Testis (tissue), 5 donors: ENCODE measurements at regions of chr3 and their contacts with region 1.

Region 1: DNA sequence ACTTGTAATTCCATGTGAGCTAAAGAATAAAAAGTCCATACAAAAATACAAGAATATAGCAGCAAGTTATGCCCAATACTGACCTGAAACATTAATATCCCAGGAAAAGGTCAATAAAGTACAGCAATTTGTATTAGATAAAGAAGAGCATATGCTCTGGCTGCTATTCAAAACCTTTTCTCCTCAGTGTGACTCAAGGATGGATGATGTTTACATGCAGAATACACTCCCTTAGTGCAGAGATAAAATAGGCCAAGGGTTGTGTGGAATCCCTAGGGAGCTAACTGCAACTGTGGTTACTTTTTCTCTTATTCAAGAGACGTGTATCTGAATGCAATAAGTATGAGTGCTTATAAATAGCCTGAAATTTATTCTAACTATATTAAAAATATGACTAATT is 78.7 kb downstream of the SLC9A9 start:
- DNase-seq: no peak
- H3K4me3 ChIP-seq: no peak overlapping the region
- H3K27ac ChIP-seq: no peak overlapping the region
- H3K4me1 ChIP-seq: no peaks in the 10 kb centered on the region
- H3K27me3 ChIP-seq: no peaks in the 10 kb centered on the region
- CTCF ChIP-seq: no peak
- POLR2A ChIP-seq: no peak

Region 2: GRCh38 chr3:143885780-143886427 is 116.3 kb after region 1 on chr3:
- intact Hi-C with region 1: no loop called
- DNase-seq: peak; percentile 43
- H3K4me3 ChIP-seq: no peak overlapping the region
- H3K27ac ChIP-seq: no peak overlapping the region
- H3K4me1 ChIP-seq: no peaks in the 10 kb centered on the region
- H3K27me3 ChIP-seq: no peaks in the 10 kb centered on the region
- CTCF ChIP-seq: peak; percentile 6 to 56 (median 37)
- POLR2A ChIP-seq: no peak

Region 3: DNA sequence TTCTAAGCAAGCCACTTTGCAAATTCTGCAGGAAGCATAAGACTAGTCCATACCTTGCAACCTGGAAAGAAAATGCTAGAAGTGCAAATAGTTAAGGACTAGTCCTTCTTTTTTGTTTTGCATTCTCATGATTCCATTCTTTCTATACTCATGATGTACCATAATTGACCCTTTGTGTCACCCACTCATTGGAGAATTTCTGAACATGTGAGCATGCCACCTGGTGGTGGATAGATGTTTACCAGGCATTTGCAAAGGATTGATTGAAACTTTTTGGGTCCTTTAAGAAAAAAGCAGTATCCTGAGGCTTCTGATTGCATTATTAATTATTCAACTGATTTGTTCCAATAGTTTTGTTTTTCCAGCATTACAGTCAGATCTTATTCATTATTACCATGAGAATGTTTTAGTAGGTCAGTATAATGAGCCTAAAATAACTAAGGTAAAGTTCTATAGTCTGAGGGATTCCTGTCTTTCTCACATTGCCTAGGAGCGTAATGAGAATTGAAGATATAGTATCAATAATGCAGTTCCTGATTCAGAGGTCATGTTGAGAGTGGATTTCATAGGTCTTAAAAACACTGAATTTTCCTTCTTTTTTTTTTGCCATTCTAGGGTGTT is 181.8 kb after region 1 on chr3:
- intact Hi-C with region 1: loop called (anchors 5 kb)
- DNase-seq: peak; percentile 46
- H3K4me3 ChIP-seq: no peak overlapping the region
- H3K27ac ChIP-seq: no peak overlapping the region
- H3K4me1 ChIP-seq: no peaks in the 10 kb centered on the region
- H3K27me3 ChIP-seq: no peaks in the 10 kb centered on the region
- CTCF ChIP-seq: peak; percentile 49 to 75 (median 64)
- POLR2A ChIP-seq: no peak